ENCODE measurements at regions of chr18 and their contacts with region 1.

Region 1: DNA sequence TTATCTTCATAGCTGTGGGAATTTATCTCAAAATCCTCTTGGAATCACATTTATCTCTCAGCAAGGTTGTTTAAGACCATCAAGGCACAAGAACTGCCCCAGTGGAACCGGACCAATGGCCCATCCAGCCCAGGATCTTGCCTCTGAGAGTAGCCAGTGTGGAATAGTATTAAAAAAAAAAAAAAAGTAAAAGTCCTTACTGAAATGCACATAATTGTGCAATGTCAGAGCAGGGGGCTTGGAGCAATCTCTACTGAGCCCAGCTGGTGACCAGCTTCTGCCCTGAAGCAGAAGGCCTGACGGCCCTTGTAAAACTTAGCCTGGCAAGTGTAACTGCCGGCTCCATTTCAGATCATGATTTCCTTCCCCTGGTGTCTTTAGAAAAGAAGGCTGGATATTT is 355.6 kb upstream of the PIK3C3 start:
- DNase-seq: no peak
- ATAC-seq: no peak

Region 2: GRCh38 chr18:41642756-41643155 is 43.3 kb after region 1 on chr18:
- intact Hi-C with region 1: no loop called
- DNase-seq: no peak
- ATAC-seq: no peak

Region 3: GRCh38 chr18:41721103-41721790 is 121.8 kb after region 1 on chr18:
- intact Hi-C with region 1: loop called (anchors 2 kb)
- DNase-seq: no peak
- ATAC-seq: no peak

Region 4: GRCh38 chr18:41949206-41949920 is 349.9 kb after region 1 on chr18:
- intact Hi-C with region 1: no loop called
- DNase-seq: no peak
- ATAC-seq: no peak